ENCODE measurements at regions of chr12 and their contacts with region 1.

Region 1: GRCh38 chr12:53180220-53180930 is at the starts of genes CSAD and ZNF740:
- DNase-seq: peak; percentile 86 to 98 (median 97)
- ATAC-seq: peak; percentile 98
- H3K4me3 ChIP-seq: peak within 1 kb of the TSS; percentile 89
- H3K4me3 Mint-ChIP-seq: peak within 1 kb of the TSS; percentile 84 to 98 (median 92)
- H3K27ac ChIP-seq: peak within 1 kb of the TSS; percentile 92
- H3K27ac Mint-ChIP-seq: peak within 1 kb of the TSS; percentile 93 to 98 (median 97)
- H3K4me1 ChIP-seq: peaks cover 30 to 46% of the 10 kb centered on the region in 2 donors
- H3K4me1 Mint-ChIP-seq: peaks cover 44 to 57% (median 52%) of the 10 kb centered on the region in 7 donors
- H3K27me3 ChIP-seq: no peaks in the 10 kb centered on the region
- H3K27me3 Mint-ChIP-seq: no peaks in the 10 kb centered on the region
- total RNA-seq, gene CSAD: 34.1 to 76.3 (median 69.1) TPM
- total RNA-seq, gene ZNF740: 37.2 to 135 (median 49.5) TPM

Region 2: DNA sequence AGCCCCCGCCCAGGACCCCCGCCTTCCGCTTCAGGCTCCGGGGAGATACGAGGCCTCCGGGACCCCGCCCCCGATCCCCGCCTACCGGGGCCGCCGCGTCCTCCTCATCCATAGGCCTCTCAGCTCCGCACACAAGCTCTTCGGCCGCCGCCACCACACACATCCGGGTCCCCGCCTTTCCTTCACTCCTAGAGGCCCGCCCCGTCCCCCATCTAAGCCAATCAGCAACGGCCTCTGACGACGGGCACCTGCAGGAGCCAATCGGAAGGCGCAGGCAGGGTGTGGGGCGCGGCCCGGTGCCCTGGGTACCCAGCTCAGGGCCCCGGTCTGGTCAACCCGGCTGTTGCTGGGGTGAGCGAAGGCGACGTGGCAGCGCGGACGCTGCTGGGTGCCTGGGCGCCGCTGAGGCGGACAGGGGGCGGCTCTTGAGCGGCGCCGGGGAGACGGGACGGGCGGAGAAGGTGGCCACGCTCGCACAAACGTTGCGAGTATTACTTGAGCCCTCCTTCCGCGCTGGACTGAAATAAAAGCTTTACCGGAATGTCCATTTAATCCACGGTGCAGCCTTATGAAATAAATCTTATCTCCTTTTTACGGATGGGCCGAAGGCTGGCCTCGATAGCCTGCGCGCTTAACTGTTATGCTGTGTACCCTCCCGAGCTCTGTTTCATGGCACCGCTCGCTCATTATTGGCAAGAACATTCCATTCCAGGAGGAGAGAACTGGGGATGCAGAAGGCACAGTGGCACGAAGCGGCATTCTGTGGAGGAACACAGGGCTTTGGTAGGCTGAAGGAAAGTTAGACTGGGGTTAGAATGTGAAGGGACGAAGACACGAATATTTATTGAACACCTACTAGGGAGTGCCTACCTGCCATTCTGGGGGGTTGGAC is 100.9 kb before region 1 on chr12 and contains the start of gene SPRYD3:
- CTCF ChIA-PET with region 1: no interaction called
- POLR2A ChIA-PET with region 1: interaction called, 13 read pairs
- intact Hi-C with region 1: loop called (anchors 1 kb)
- DNase-seq: peak; percentile 96 to 99 (median 97)
- ATAC-seq: peak; percentile 99
- H3K4me3 ChIP-seq: peak within 1 kb of the TSS; percentile 95
- H3K4me3 Mint-ChIP-seq: peak within 1 kb of the TSS; percentile 90 to 98 (median 92)
- H3K27ac ChIP-seq: peak within 1 kb of the TSS; percentile 93
- H3K27ac Mint-ChIP-seq: peak within 1 kb of the TSS; percentile 95 to 98 (median 96)
- H3K4me1 ChIP-seq: peaks cover 10 to 14% of the 10 kb centered on the region in 2 donors
- H3K4me1 Mint-ChIP-seq: peaks cover 26 to 53% (median 40%) of the 10 kb centered on the region in 7 donors
- H3K27me3 ChIP-seq: no peaks in the 10 kb centered on the region
- H3K27me3 Mint-ChIP-seq: peaks cover 0 to 3% (median 0%) of the 10 kb centered on the region in 5 donors
- total RNA-seq, gene SPRYD3: 33.0 to 48.0 (median 36.4) TPM

Region 3: DNA sequence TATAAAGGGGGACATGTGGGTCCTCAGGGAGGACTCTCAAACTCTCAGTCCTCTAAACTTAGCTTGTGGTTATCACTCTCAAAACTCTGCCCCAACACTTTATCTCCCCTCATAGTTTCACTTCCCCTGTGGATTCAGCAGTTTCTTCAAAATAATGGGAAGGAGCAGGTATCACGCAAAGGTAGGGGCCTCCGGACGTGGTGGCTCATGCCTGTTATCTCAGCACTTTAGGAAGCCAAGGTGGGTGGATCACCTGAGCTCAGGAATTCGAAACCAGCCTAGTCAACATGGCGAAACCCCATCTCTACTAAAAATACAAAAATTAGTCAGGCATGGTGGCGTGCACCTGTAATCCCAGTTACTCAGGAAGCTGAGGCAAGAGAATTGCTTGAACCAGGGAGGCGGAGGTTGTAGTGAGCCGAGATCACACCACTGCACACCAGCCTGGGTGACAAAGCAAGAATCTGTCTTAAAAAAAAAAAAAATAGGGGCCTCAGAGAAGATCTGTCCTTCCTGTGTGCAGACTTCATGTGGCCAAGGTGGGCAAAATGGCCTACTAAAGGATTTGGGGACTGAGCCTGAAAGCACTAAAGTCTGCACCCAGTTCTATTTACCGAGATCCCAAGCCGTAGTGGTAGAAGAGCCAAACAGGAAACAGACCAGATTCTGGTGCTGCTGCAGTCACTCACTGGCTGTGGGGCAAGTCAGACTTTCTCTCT is 20.2 kb after region 1 on chr12:
- CTCF ChIA-PET with region 1: interaction called, 26 read pairs
- POLR2A ChIA-PET with region 1: interaction called, 217 read pairs
- intact Hi-C with region 1: loop called in 1 of 2 experiments (anchors 1 kb)
- DNase-seq: peak in 4 of 9 donors; percentile 41 to 46 (median 42)
- ATAC-seq: peak; percentile 29
- H3K4me3 ChIP-seq: peak overlapping the region; percentile 21
- H3K4me3 Mint-ChIP-seq: peak overlapping the region; percentile 65 to 90 (median 76)
- H3K27ac ChIP-seq: peak overlapping the region; percentile 75
- H3K27ac Mint-ChIP-seq: peak overlapping the region; percentile 82 to 95 (median 92)
- H3K4me1 ChIP-seq: peaks cover 70 to 94% of the 10 kb centered on the region in 2 donors
- H3K4me1 Mint-ChIP-seq: peaks cover 56 to 91% (median 74%) of the 10 kb centered on the region in 7 donors
- H3K27me3 ChIP-seq: no peaks in the 10 kb centered on the region
- H3K27me3 Mint-ChIP-seq: no peaks in the 10 kb centered on the region

Region 4: GRCh38 chr12:53220801-53221202 is 40.4 kb after region 1 on chr12:
- CTCF ChIA-PET with region 1: interaction called, 5 read pairs
- POLR2A ChIA-PET with region 1: interaction called, 63 read pairs
- intact Hi-C with region 1: loop called (anchors 1 kb)
- DNase-seq: peak in 8 of 9 donors; percentile 51 to 85 (median 55)
- ATAC-seq: peak; percentile 79
- H3K4me3 ChIP-seq: peak overlapping the region; percentile 95
- H3K4me3 Mint-ChIP-seq: peak overlapping the region; percentile 94 to 100 (median 98)
- H3K27ac ChIP-seq: peak overlapping the region; percentile 78
- H3K27ac Mint-ChIP-seq: peak overlapping the region; percentile 84 to 98 (median 94)
- H3K4me1 ChIP-seq: peaks cover 55 to 63% of the 10 kb centered on the region in 2 donors
- H3K4me1 Mint-ChIP-seq: peaks cover 50 to 80% (median 77%) of the 10 kb centered on the region in 7 donors
- H3K27me3 ChIP-seq: no peaks in the 10 kb centered on the region
- H3K27me3 Mint-ChIP-seq: no peaks in the 10 kb centered on the region

Region 5: DNA sequence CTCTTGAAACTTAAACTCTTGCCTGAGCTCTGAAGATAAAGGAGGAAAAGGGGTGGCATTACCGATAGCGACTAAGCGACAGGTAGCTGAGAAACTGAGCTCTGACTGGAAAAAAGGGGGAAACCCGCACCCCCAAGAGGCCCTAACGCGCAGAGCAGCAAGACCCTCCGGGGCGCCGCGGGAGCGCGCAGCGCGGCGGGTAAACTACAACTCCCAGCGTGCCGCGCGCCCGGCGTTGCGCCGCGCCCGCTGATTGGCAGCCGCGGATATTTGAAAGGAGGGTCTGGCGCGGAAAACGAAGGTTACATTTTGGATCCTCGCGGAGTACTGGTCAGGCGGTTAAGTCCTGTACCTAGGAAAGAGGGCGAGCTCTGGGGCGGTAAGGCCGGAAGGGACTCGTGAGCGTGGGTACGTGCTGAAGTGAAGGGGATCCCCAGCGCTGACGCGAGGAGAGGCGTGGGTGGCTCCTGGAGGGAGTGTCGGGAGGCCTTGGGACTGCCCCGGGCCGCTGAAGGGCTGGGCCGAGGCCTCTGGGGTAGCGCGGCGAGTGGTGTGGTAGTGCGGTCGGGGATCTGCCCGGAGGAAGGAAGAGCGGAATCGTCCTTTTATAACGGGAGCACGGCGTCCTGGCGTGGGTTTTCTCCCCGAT is 87.7 kb after region 1 on chr12 and contains the start of gene ESPL1:
- CTCF ChIA-PET with region 1: interaction called, 5 read pairs
- POLR2A ChIA-PET with region 1: interaction called, 14 read pairs
- intact Hi-C with region 1: loop called (anchors 1 kb)
- DNase-seq: peak; percentile 67 to 91 (median 81)
- ATAC-seq: peak; percentile 93
- H3K4me3 ChIP-seq: peak within 1 kb of the TSS; percentile 80
- H3K4me3 Mint-ChIP-seq: peak within 1 kb of the TSS; percentile 95 to 99 (median 96)
- H3K27ac ChIP-seq: peak within 1 kb of the TSS; percentile 83
- H3K27ac Mint-ChIP-seq: peak within 1 kb of the TSS; percentile 44 to 98 (median 88)
- H3K4me1 ChIP-seq: peaks cover 9 to 11% of the 10 kb centered on the region in 2 donors
- H3K4me1 Mint-ChIP-seq: peaks cover 10 to 54% (median 20%) of the 10 kb centered on the region in 7 donors
- H3K27me3 ChIP-seq: no peaks in the 10 kb centered on the region
- H3K27me3 Mint-ChIP-seq: no peaks in the 10 kb centered on the region
- total RNA-seq, gene ESPL1: 0.08 to 65.4 (median 1.1) TPM

Region 6: GRCh38 chr12:53500776-53501614 is 320.6 kb after region 1 on chr12 and contains the start of gene TARBP2:
- CTCF ChIA-PET with region 1: no interaction called
- POLR2A ChIA-PET with region 1: no interaction called
- intact Hi-C with region 1: loop called (anchors 1 kb)
- DNase-seq: peak; percentile 87 to 99 (median 98)
- ATAC-seq: peak; percentile 87
- H3K4me3 ChIP-seq: peak within 1 kb of the TSS; percentile 84
- H3K4me3 Mint-ChIP-seq: peak within 1 kb of the TSS; percentile 86 to 96 (median 92)
- H3K27ac ChIP-seq: peak within 1 kb of the TSS; percentile 98
- H3K27ac Mint-ChIP-seq: peak within 1 kb of the TSS; percentile 87 to 100 (median 97)
- H3K4me1 ChIP-seq: peaks cover 24 to 27% of the 10 kb centered on the region in 2 donors
- H3K4me1 Mint-ChIP-seq: peaks cover 15 to 56% (median 43%) of the 10 kb centered on the region in 7 donors
- H3K27me3 ChIP-seq: no peaks in the 10 kb centered on the region
- H3K27me3 Mint-ChIP-seq: no peaks in the 10 kb centered on the region
- total RNA-seq, gene TARBP2: 25.1 to 45.2 (median 40.7) TPM